Sciatic nerve (tissue), 2 donors: ENCODE measurements at regions of chr20 and their contacts with region 1.

Region 1: DNA sequence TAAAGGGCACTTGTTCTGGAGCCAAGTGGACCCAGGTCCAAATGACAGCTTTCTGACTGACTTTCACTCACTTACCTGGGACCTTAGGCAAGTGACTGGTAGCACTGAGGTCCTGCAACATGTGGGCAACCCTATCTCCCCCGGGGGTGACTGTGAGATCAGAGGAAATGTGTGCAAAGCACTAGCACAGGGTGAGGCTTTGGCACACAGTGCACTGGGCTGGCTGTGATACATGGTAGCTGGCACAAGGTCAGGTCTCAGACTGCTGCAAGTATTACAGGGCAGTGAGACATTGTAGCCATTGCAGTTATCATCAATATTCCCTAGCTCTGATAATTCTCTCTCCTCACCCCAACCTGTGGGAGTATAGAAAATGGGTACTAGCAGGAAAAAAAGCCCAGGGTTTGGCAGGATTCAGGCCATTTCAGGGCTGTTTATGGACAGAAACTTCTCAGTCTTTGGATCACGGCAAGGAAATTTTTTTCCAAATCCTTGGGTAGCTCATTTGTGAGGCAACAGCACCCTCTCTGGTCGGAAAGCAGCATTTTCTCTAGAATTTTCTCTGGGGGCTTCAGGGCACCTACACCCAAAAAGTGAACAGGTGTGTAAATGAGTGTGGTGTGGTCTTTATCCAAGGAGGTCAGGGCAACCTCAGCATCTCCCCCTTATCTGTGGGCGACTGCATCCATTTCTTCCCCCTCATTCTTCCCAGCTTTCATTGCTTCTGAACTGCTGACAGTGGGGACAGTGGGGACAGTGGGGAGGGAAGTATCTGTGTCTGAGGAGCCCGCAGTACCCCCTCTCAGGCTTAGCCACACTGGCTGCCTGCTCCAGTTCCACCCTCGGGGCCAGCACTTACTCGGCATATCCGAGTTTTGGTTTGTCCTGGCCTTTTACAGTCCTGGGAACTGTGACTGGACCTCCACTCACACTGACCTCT is 148.7 kb upstream of the PHACTR3 start:
- DNase-seq: no peak
- ATAC-seq: peak; percentile 74

Region 2: DNA sequence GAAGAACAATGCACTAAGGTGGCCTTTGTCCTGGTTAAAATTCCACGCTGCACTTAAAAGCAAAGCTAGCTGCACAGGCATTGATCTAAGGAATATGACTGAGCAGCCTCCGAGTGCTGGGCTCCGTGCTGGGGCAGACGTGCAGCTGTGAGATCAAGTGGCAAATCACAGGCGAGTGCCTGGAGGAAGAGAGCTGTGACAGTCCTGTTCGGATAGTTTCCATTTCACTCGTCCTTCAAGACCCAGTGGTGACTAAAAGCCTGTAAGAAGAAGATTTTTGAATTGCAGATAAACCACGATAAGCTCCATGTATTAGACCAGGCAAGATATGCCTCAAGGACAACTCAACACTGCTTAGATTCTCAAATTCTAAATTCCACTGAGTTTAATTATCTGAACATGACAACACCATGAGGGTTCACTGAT is 1475.1 kb before region 1 on chr20:
- intact Hi-C with region 1: loop called (anchors 5 kb)
- DNase-seq: peak; percentile 27
- ATAC-seq: no peak

Region 3: DNA sequence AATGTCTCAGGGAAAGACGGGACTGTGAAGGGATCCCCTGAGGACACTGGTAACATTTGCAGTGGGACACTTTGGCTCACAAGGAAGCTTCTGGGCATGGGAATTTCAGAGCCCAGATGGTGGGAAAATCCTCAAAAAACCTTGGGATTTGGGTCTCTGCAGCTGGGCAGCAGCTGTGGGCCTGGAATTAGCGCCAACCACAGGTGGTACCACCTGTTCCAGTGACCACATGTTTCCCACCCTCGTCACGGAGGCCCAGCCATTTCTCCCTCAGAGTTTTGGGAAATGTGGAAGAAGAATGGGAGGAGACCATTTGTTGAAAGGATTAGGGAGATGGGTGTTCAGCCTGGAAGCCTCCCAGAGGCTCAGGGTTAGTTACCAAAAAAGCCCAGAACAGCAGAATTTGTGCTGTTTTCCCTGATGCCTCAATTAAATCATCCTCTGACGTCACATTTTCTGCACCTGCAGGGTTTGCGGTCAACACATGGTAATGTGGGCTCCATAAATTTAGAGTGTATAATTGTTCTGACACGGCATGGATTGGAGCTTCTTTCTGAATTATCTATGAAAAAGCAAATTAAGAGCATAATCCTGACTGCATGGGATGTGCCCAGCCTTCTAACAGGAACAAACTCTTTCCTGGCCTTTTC is 120.9 kb before region 1 on chr20:
- intact Hi-C with region 1: no loop called
- DNase-seq: no peak
- ATAC-seq: no peak

Region 4: DNA sequence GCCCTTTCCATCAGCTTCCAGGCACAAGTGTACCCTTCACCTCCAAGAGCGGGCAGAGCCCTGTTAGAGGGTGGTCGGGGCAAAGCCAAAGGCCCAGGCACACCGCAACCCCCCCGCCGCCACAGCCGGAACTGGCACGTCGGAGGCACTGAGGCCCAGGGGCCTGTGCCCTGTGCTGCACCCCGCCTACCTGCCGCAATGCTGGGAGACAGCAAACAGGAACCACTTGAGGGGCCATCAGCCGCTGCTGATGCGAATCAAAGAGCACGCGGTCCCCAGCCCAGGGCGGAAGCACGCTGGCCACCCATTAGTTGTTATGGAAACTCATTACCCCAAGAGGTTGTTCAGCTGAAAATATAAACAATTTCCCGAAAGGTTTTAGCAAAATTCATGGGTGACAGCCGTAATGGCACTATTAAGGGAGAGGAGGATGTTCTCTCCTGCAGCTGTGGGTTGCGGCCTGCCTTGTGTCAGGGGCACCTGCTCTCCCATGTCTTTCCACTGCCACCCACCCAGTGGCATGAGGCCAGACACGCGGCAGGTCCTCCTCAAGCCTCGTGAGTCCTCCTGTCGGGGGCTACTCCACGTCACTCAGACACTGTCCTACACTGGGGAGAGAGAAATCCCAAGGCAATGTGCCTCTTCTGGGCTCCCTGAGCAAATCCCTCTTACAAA is 89.9 kb before region 1 on chr20:
- intact Hi-C with region 1: no loop called
- DNase-seq: no peak
- ATAC-seq: no peak

Region 5: DNA sequence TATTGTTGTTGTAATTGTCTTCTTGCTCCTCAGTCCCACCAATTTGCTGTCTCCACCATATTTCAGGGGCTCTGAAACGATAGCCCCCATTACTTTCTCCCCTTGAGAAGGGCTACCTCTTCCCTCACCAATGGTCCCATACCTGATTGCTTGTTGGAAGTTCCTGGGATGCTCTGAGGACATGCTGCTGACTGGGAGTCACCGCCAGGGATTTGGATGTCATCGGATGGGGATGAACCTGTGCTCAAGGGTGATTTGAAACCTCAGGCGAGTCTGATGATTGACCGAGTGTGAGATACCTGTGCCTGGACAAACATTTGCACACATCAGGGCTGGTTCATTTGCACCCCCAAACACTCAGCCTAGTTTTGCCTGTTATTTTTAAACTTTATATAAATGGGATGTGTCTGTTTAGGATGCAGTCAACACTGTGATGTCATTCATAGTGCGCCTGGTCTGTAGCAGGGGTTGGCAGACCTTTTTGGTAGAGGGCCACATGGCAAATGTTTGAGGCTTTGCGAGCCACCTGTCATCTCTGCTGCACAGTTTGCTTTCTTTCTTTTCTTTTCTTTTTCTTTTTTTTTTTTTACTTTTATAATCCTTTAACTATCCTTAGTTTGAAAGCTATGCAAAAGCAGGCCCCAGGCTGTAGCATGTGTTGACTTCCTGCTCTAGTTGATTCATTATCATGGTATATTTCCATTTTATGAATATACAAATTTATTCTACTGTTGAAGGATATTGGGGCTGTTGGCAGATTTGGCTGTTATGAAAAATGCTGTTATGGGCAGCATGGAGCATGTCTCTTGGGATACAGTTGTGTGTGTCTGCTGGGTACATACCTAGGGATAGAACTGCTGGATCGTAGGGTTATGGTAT is 30.1 kb after region 1 on chr20:
- intact Hi-C with region 1: no loop called
- DNase-seq: no peak
- ATAC-seq: no peak